ENCODE measurements at regions of chr3 and their contacts with region 1.

Region 1: GRCh38 chr3:161423911-161424522 is 52.7 kb upstream of the SPTSSB start:
- DNase-seq: peak in 1 of 2 experiments; percentile 59
- H3K4me3 ChIP-seq: no peak overlapping the region
- H3K27ac ChIP-seq: no peak overlapping the region
- H3K4me1 ChIP-seq: no peaks in the 10 kb centered on the region
- H3K27me3 ChIP-seq: no peaks in the 10 kb centered on the region
- CTCF ChIP-seq: peak; percentile 95

Region 2: DNA sequence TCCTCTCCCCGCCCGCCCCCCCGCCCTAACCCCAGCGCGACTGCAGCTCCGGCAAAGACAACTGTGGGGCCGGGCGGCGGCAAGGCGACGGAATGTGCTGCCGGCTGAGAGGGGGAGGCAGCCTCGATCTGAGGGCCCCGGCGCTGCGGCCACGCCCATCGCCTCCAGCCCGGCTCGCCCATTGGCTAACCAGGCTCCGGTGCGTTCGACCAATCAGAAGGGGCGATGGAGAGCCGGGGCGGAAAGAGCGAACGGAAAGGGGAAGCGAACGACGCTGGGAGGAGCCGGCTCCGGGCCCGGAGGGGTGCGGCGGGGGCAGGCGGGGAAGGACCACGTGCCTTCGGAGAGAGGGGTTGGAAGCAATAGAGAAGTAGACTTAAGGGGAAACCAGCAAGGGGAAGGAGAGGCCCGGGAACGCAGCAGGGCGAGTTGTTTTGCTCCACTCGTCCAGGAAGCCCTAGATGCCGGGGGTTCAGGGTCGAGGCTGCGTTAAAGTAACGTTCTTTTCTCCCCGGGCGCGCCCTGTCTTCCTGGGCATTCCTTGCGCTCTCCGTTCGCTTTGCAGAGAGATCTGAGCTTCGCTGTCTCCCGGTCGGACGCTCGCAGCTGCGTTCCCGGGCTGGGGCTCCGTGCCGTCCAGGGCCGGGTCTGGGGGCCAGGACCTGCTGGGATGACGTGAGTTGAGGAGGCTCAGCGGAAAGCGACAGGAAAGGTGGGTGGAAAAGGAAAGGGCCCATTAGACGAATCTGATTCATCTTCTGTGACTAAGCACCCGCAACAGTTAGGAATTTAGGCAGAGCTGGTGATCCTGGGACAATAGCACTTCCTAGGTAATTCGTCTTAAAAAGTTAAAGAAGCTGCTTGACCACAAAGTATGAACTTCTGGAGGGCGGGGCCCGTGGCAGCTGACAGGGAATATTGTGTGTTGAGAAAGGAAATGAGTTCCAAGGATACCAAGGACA is 858.3 kb before region 1 on chr3 and contains the start of gene KPNA4:
- CTCF ChIA-PET with region 1: no interaction called
- POLR2A ChIA-PET with region 1: no interaction called
- intact Hi-C with region 1: loop called (anchors 10 kb)
- DNase-seq: peak; percentile 94 to 99
- H3K4me3 ChIP-seq: peak within 1 kb of the TSS; percentile 86
- H3K27ac ChIP-seq: peak within 1 kb of the TSS; percentile 98
- H3K4me1 ChIP-seq: peaks cover 40% of the 10 kb centered on the region
- H3K27me3 ChIP-seq: no peaks in the 10 kb centered on the region
- CTCF ChIP-seq: no peak
- total RNA-seq, gene KPNA4: 49.2 and 61.0 TPM in 2 replicates

Region 3: DNA sequence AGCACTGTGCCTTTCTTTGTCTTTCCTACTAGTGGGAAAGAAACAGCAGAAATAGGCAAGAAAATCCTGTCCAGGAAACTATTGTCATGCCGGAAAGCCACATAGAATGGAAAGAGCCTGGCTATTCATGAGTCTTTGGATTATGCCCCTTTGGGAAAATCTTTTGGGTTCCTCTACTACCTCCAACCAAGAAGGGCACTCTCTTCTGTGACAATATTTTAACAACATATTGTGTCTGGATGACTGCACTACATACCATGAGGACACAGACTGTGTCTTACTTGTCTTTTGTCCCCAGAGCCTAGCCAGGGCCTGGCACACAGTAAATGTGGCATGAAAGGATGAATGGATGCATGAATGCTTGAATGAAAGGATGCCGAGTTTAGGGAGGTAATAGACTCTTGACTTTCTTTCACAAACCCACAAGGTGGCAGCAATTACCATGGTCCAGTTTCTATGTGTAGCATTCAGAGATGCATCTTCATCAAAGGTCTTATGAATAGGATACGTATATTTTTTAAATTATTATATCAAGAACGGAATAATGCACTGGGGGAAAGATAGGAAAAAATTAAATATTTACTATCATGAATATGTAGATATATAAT is 716.7 kb before region 1 on chr3:
- CTCF ChIA-PET with region 1: no interaction called
- POLR2A ChIA-PET with region 1: no interaction called
- intact Hi-C with region 1: loop called (anchors 2 kb)
- DNase-seq: peak; percentile 21 to 41
- H3K4me3 ChIP-seq: no peak overlapping the region
- H3K27ac ChIP-seq: no peak overlapping the region
- H3K4me1 ChIP-seq: no peaks in the 10 kb centered on the region
- H3K27me3 ChIP-seq: no peaks in the 10 kb centered on the region
- CTCF ChIP-seq: peak; percentile 76

Region 4: GRCh38 chr3:160941885-160942494 is 482.0 kb before region 1 on chr3:
- CTCF ChIA-PET with region 1: no interaction called
- POLR2A ChIA-PET with region 1: no interaction called
- intact Hi-C with region 1: loop called (anchors 5 kb)
- DNase-seq: peak; percentile 50 to 66
- H3K4me3 ChIP-seq: no peak overlapping the region
- H3K27ac ChIP-seq: no peak overlapping the region
- H3K4me1 ChIP-seq: no peaks in the 10 kb centered on the region
- H3K27me3 ChIP-seq: no peaks in the 10 kb centered on the region
- CTCF ChIP-seq: peak; percentile 93

Region 5: DNA sequence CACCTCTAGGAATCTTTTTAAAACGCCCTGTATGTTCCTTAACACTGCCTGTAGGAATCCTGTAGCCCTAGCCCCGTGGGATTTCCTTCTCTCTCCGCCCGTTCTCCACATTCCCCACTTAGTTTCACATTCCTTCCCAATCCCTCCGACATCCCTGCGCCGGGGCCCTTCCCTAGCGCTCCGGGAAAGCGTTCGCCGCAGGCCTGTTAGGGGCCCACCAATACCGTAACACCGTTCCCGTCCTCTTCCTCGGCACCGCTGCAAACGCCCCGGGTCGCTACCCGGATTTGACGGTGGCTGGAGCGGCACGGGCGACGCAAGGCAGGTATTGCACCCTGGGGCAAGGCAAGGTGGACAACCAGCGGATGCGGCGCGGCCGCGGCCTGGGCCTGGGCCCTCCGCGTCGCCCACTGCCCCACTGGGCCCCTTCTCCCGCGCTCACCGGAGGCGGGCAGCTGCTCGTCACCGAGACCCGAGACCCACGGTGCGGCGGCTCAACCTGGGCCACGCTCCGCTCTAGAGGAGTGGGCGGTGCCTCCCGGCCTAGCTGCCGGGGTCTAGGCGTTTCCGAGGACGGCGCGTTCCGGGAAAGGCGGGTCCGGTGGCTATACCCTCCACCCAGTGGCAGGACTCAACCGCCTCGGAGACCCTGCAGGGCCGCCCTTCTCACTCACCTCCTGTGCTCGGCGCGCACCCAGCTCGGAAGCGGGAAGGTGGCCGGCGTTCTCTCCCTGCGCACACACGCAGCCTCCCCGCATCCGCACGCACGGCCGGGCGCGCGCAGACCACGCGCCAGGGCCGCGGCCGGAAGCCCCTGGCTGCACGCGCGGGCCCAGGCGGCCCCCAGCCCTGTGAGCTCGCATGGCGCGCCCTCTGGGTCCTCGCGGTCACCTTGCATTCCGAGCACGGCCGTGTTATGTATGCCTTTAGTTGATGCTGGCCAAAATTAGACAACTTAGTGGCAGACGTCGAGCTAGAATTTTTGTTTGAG is 319.2 kb before region 1 on chr3 and contains the start of gene B3GALNT1:
- CTCF ChIA-PET with region 1: no interaction called
- POLR2A ChIA-PET with region 1: no interaction called
- intact Hi-C with region 1: loop called (anchors 10 kb)
- DNase-seq: peak; percentile 47 to 75
- H3K4me3 ChIP-seq: peak within 1 kb of the TSS; percentile 85
- H3K27ac ChIP-seq: no peak within 1 kb of the TSS
- H3K4me1 ChIP-seq: peaks cover 23% of the 10 kb centered on the region
- H3K27me3 ChIP-seq: no peaks in the 10 kb centered on the region
- CTCF ChIP-seq: 0 out of 2 replicates have a peak, but pooled peaks have one; percentile 24
- total RNA-seq, gene B3GALNT1: 8.8 and 17.3 TPM in 2 replicates

Region 6: DNA sequence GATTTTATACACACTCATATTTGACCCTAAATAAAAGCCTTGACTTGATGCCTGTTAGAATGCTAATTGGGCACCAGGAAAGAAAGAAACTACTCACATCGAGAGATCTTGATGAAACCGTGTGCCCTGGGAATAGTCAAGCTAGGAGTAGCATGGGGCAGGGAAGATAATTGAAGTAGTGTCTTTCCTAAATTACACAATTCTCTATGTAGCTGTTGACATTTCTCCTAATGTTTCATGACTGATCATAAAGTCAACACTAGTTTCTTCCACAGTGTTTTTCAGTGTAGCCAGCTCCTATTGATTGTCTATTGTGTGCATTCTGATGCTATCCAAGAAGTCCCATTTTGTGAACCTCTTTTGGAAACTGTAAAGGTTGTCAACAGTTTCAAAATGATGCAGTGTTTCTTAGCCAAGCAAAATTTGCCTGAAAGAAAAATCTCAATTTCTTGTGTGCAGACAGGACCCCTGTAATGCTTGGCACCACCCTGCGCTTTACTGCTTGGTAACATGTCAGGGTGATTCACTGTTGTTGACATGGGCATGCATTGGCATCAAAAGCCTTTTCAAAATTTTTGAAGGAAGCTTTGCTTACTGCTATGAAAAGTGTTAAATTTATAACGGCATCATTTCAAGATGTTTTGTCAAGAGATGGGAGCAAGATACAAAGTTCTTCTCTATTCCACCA is 20.1 kb after region 1 on chr3:
- CTCF ChIA-PET with region 1: interaction called, 12 read pairs
- POLR2A ChIA-PET with region 1: no interaction called
- intact Hi-C with region 1: no loop called
- DNase-seq: no peak
- H3K4me3 ChIP-seq: no peak overlapping the region
- H3K27ac ChIP-seq: no peak overlapping the region
- H3K4me1 ChIP-seq: no peaks in the 10 kb centered on the region
- H3K27me3 ChIP-seq: no peaks in the 10 kb centered on the region
- CTCF ChIP-seq: no peak

Measured in PC-9 (cell line).